ENCODE measurements at regions of chr2 and their contacts with region 1.

Region 1: DNA sequence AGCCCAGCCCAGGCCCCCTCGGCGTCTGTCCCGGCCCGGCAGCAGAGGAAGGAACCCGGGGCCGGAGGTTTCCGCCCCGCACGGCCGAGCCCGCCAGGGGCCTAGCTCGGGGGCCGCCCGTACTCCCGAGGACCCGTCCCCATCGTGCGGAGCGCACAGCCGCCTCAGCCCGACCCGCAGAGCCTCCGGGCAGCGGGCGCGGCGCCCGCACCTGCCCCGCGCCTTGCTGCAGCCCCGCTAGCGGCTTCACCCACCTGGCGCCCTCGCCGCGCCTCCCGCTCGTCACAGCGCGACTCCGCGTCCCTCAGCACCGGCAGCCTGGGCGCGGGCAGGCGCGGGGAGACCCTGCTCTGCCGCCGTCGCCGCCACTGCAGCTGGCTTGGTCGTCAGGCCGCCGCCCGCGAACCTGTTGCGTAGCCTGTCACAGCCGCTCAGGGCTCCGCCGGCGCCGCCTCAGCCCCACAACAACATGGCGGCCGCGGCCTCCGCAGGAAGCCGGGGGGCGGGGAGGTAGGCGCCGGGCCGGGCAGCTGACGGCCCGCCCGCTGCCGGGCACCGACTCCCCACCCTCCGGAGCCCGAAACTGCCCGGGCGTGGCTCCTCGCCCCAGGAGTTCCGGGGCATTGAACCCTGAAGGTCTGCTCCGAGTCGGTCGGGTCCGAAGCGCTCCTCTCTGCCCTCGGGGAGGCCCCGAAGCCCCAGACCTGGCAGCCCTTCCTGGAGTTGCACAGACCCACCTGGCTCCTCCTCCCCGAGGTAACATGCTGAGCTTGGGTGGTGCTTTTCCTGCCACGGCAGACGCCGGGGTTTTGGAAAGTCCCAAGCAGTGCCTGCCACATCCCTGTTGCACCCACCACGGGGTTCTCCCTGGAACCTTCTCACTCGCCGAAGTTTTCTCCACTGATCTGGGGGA is at the start of gene ITSN2:
- DNase-seq: peak; percentile 88
- ATAC-seq: peak; percentile 85
- H3K4me3 Mint-ChIP-seq: peak within 1 kb of the TSS; percentile 91
- H3K27ac Mint-ChIP-seq: peak within 1 kb of the TSS; percentile 97
- H3K4me1 Mint-ChIP-seq: peaks cover 50% of the 10 kb centered on the region
- H3K27me3 Mint-ChIP-seq: no peaks in the 10 kb centered on the region
- CTCF ChIP-seq: no peak
- total RNA-seq, gene ITSN2: 147 and 156 TPM in 2 replicates

Region 2: DNA sequence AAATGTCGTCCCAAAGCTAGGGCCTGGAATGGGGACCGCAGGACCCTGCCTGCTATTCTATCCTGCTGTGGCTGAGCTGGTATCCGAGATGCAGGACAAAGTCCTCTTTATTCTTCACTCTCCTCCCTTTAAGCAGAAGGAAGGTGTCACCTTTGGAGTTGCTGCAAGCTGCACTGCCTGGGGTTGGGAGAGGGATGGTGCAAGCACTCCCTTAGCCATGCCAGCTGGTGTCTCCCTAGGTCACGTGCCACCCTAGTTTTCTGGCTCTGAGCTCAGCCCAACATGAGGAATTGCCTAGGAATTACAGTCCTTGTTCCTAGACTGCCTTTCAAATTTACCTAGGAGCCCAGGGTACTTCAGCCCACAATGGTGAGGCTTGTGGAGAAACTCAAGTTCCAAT is 206.8 kb before region 1 on chr2:
- CTCF ChIA-PET with region 1: no interaction called
- POLR2A ChIA-PET with region 1: no interaction called
- intact Hi-C with region 1: no loop called
- DNase-seq: no peak
- ATAC-seq: no peak
- H3K4me3 Mint-ChIP-seq: no peak overlapping the region
- H3K27ac Mint-ChIP-seq: no peak overlapping the region
- H3K4me1 Mint-ChIP-seq: no peaks in the 10 kb centered on the region
- H3K27me3 Mint-ChIP-seq: no peaks in the 10 kb centered on the region
- CTCF ChIP-seq: no peak

Region 3: DNA sequence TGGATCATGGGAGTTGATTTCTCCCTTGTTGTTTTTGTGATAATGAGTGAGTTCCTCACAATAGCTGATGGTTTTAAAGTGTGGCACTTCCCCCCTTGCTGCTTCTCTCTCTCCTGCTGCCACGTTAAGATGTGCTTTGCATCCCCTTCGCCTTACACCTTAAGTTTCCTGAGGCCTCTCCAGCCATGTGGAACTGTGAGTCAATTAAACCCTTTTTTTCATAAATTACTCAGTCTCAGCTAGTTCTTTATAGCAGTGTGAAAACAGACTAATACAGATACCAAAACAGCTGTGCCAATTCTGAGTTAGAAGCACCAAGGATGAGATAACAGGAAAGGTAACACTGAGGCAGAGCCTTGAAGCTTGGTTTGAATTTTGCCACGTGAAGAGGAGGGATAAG is 44.6 kb before region 1 on chr2:
- CTCF ChIA-PET with region 1: interaction called, 4 read pairs
- POLR2A ChIA-PET with region 1: interaction called, 34 read pairs
- intact Hi-C with region 1: loop called (anchors 1 kb)
- DNase-seq: no peak
- ATAC-seq: peak; percentile 87
- H3K4me3 Mint-ChIP-seq: peak overlapping the region; percentile 50
- H3K27ac Mint-ChIP-seq: peak overlapping the region; percentile 80
- H3K4me1 Mint-ChIP-seq: peaks cover 51% of the 10 kb centered on the region
- H3K27me3 Mint-ChIP-seq: no peaks in the 10 kb centered on the region
- CTCF ChIP-seq: no peak

Region 4: GRCh38 chr2:24342110-24342910 is 18.0 kb before region 1 on chr2:
- CTCF ChIA-PET with region 1: no interaction called
- POLR2A ChIA-PET with region 1: interaction called, 50 read pairs
- intact Hi-C with region 1: loop called (anchors 1 kb)
- DNase-seq: no peak
- ATAC-seq: peak; percentile 64
- H3K4me3 Mint-ChIP-seq: peak overlapping the region; percentile 64
- H3K27ac Mint-ChIP-seq: peak overlapping the region; percentile 89
- H3K4me1 Mint-ChIP-seq: peaks cover 93% of the 10 kb centered on the region
- H3K27me3 Mint-ChIP-seq: no peaks in the 10 kb centered on the region
- CTCF ChIP-seq: no peak

Region 5: GRCh38 chr2:24597181-24597870 is 237.0 kb after region 1 on chr2:
- CTCF ChIA-PET with region 1: no interaction called
- POLR2A ChIA-PET with region 1: no interaction called
- intact Hi-C with region 1: no loop called
- DNase-seq: no peak
- ATAC-seq: no peak
- H3K4me3 Mint-ChIP-seq: no peak overlapping the region
- H3K27ac Mint-ChIP-seq: no peak overlapping the region
- H3K4me1 Mint-ChIP-seq: no peaks in the 10 kb centered on the region
- H3K27me3 Mint-ChIP-seq: no peaks in the 10 kb centered on the region
- CTCF ChIP-seq: no peak

Region 6: GRCh38 chr2:25388491-25388890 is 1028.2 kb after region 1 on chr2:
- CTCF ChIA-PET with region 1: no interaction called
- POLR2A ChIA-PET with region 1: no interaction called
- intact Hi-C with region 1: no loop called
- DNase-seq: no peak
- ATAC-seq: peak; percentile 90
- H3K4me3 Mint-ChIP-seq: peak overlapping the region; percentile 75
- H3K27ac Mint-ChIP-seq: peak overlapping the region; percentile 74
- H3K4me1 Mint-ChIP-seq: peaks cover 30% of the 10 kb centered on the region
- H3K27me3 Mint-ChIP-seq: no peaks in the 10 kb centered on the region
- CTCF ChIP-seq: no peak

Measured in activated B cell treated with CpG ODN at 0.5 μM for 24 hours (primary cell).